GM12878 (cell line): ENCODE measurements at regions of chr6 and their contacts with region 1.

Region 1: DNA sequence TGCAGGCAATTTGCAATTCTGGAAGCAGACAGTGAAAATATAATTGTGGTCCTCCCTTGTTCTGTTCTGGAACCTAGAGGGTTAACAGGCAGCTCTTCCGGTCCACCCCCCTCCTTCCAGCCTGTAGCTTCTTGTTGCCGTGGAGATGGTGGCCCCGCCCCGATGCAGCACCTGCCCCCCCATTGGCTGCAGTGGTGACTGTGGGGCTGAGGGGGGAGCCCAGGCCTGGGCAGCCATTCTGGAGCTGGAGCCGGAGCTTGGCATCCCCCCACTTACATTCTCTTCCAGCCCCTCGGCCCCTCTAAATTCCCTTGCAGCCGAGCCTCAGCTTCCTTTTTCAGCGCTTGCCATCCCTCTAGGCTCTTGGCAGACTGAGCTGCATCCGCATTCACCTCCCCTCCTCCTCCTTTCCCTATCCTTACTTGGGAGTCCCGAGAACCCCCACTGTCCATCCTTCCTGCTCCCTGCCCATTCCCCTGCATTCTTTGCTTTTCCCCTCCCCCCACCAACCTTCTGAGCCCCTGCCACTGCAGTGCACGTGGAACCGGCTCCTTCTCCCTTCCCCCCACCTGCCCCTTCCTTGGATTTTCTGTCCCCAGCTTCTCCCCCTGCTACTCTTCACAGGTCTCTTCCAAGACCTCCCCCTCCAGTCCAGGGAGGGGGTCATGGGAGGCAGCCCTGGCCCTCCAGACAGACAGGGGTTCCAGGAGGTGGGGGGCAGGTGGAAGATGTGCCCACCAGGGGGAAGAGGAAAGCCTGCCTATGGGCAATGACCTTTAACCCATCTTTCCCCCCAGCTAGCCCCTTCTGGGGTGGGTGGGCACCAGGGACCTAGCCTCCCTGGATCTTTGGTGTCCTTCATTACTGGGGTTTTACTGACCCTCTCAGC is 11.4 kb downstream of the SYNGAP1 start:
- DNase-seq: no peak
- ATAC-seq: peak; percentile 85
- H3K4me3 ChIP-seq: peak overlapping the region; percentile 80
- H3K27ac ChIP-seq: peak overlapping the region; percentile 36; the same call in 1 of the 2 replicates
- H3K4me1 ChIP-seq: peaks cover 47% of the 10 kb centered on the region
- H3K27me3 ChIP-seq: no peaks in the 10 kb centered on the region
- CTCF ChIP-seq: no peak
- EP300 ChIP-seq: no peak
- POLR2A ChIP-seq: no peak
- RAD21 ChIP-seq: no peak

Region 2: DNA sequence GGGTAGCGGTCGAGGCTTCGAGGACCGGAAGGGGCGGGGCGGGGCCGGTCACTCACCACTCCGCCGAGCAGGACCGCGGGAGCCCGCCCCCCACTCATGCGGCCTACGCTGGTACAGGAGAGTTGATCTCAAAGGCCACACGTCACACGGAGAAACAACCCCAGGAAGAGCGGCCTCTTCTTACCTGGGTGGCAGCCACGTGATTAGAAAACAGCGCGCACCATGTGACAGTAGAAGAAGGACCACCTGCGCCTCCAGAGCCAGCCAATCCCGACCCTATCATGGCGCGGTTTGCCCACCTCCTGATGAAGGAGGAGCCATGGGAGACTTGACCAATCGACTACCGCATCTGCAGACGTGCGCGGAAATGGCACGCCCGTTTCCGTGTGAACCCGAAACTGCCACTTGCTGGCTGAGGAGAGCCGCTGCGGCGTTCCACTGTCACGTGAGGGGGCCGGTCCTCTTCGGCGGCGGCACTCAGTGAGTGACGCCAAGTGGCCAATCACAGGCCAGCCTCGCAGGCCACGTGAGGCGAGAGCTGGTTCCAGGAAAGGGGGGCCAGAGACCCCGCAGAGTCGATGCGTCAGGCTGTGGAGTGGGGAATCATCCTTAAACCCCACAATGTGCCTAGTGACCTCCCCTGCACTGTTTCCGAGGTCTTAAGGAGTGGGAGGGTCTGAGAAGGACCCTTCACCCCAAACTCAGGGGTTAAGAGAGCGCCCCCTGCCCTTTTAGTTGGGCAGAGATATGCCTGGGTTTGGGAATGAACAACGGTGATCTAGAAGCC is 13.1 kb before region 1 on chr6 and contains the start of gene CUTA:
- CTCF ChIA-PET with region 1: interaction called, 25 read pairs
- POLR2A ChIA-PET with region 1: interaction called, 14 read pairs
- RAD21 ChIA-PET with region 1: interaction called, 11 read pairs
- SMC1A ChIA-PET with region 1: interaction called, 8 read pairs
- in situ Hi-C with region 1: no loop called
- intact Hi-C with region 1: no loop called
- DNase-seq: peak; percentile 99
- ATAC-seq: peak; percentile 91
- H3K4me3 ChIP-seq: peak within 1 kb of the TSS; percentile 98
- H3K27ac ChIP-seq: peak within 1 kb of the TSS; percentile 97
- H3K4me1 ChIP-seq: peaks cover 30% of the 10 kb centered on the region
- H3K27me3 ChIP-seq: no peaks in the 10 kb centered on the region; a peak in 2 of 4 replicates
- CTCF ChIP-seq: peak; percentile 41 to 48 (median 43); a peak in 4 of 6 replicates
- EP300 ChIP-seq: no peak; a peak in 1 of 4 replicates
- POLR2A ChIP-seq: peak; percentile 86
- RAD21 ChIP-seq: no peak
- polyA plus RNA-seq, gene CUTA: 268 to 293 TPM

Region 3: DNA sequence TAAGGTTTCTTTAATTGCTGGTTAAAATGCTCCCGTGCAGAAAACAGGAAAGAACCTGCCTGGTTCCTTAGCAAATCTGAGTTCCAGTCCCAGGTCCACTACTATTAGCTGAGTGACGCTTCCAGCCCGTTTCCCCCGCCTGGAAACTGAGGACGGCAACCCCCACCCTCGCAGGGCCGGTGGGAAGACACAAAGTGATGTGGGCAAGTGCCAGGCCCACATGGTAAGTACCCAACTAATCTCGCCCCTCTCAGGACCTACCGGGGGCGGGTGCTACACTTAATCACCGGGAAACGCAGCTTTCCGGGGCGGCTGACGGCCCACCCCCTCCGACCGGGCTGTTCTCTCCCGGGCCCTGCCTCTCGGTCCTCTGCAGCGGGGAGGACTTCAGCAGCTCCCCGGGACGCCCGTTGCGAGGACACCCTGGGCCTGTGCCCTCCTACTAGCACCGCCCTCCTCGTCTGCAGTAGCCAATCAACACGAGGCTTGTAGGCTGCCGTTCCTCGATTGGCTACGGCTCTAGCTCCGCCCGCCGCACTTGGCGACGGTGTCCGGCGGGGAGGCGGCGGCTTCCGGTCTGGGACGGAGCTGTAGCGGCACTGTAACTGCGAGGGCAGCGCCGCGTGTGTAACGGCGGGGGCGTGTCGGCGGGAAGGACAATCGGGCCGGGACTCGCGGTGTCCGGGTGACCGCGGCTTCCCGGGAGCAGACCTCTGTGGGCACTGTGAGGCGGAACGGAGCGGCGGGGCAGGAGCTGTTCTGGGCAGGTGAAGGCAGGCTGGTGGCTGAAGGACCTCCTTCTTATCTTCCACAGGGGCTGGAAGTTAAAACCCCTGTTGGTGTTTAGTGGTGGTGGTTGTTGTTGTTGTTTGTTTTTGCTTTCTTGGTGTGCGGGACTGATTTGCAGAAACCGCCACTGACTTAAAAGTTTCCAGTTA is 23.0 kb after region 1 on chr6 and contains the start of gene ZBTB9:
- CTCF ChIA-PET with region 1: interaction called, 4 read pairs
- POLR2A ChIA-PET with region 1: interaction called, 8 read pairs
- RAD21 ChIA-PET with region 1: interaction called, 10 read pairs
- SMC1A ChIA-PET with region 1: interaction called, 4 read pairs
- in situ Hi-C with region 1: no loop called
- intact Hi-C with region 1: no loop called
- DNase-seq: peak; percentile 89
- ATAC-seq: peak; percentile 100
- H3K4me3 ChIP-seq: peak within 1 kb of the TSS; percentile 86
- H3K27ac ChIP-seq: peak within 1 kb of the TSS; percentile 81
- H3K4me1 ChIP-seq: peaks cover 3% of the 10 kb centered on the region; the same call in 1 of the 2 replicates
- H3K27me3 ChIP-seq: no peaks in the 10 kb centered on the region
- CTCF ChIP-seq: no peak
- EP300 ChIP-seq: no peak
- POLR2A ChIP-seq: peak; percentile 94
- RAD21 ChIP-seq: no peak
- polyA plus RNA-seq, gene ZBTB9: 1.5 to 2.6 TPM